CD4-positive, alpha-beta memory T cell (primary cell): ENCODE measurements at regions of chr6 and their contacts with region 1.

Region 1: DNA sequence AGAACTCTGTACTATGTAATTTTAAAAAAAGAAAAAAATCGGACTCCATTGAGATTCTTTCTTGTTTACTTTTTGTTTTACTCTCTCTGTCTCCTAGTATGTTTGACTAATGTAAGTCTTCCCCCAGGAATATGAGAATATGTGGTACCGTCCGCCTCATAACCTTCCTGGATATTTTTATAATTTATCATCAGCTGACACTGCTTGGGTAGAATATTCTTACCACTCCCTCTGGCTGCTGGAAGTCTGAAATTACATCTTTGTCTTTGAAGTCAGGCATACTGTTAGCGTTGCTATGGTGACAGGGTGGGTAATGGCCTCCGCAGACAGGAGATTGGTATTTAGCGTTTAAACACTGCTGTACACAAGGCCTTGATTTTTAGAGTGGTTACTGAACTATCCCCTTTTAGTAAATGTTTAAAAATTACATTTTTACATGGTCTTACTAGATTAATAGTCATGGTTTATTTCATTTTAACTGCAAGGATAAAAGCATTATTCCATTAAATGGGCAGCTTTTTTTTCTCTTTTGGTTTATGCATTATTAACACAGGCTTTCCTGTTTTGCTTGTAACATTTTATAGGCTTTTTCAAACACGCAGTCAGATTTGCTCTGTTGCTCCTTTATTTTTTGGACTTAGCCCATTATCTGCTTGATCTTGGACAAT is 176.4 kb downstream of the ARID1B start:
- DNase-seq: peak; percentile 60 to 77 (median 74)
- H3K4me3 ChIP-seq: no peak overlapping the region
- H3K4me3 Mint-ChIP-seq: peak overlapping the region in 2 of 8 donors; percentile 7 to 34
- H3K27ac ChIP-seq: no peak overlapping the region
- H3K27ac Mint-ChIP-seq: peak overlapping the region; percentile 6 to 87 (median 77)
- H3K4me1 ChIP-seq: peaks cover 52% of the 10 kb centered on the region
- H3K4me1 Mint-ChIP-seq: peaks cover 55 to 83% (median 71%) of the 10 kb centered on the region in 4 donors
- H3K27me3 ChIP-seq: no peaks in the 10 kb centered on the region
- H3K27me3 Mint-ChIP-seq: no peaks in the 10 kb centered on the region

Region 2: GRCh38 chr6:156502969-156503504 is 450.6 kb before region 1 on chr6:
- CTCF ChIA-PET with region 1: no interaction called
- POLR2A ChIA-PET with region 1: no interaction called
- intact Hi-C with region 1: no loop called
- DNase-seq: no peak
- H3K4me3 ChIP-seq: no peak overlapping the region
- H3K4me3 Mint-ChIP-seq: no peak overlapping the region
- H3K27ac ChIP-seq: no peak overlapping the region
- H3K27ac Mint-ChIP-seq: no peak overlapping the region
- H3K4me1 ChIP-seq: no peaks in the 10 kb centered on the region
- H3K4me1 Mint-ChIP-seq: no peaks in the 10 kb centered on the region
- H3K27me3 ChIP-seq: no peaks in the 10 kb centered on the region
- H3K27me3 Mint-ChIP-seq: peaks cover 4 to 9% of the 10 kb centered on the region in 2 donors

Region 3: DNA sequence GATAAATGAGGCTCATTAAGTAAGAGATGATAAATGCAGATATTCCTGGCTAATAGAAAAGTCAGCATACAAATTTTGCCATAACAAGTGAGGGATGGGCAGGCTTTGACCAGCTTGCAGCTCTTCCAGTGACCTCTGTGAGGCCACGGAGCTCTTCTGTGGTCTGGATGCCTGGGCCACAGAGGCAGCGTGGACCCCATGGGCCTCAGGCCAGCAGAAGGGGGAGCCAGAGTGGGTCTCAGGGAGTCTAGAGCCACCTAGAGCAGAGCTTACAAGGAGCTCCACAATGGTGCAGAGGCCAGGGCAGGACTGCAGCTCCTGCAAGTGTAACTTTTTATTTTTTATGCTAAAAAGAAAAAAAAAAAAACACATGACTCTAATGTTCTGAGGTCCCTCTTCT is 11.3 kb before region 1 on chr6:
- CTCF ChIA-PET with region 1: interaction called, 13 read pairs
- POLR2A ChIA-PET with region 1: no interaction called
- intact Hi-C with region 1: no loop called
- DNase-seq: no peak
- H3K4me3 ChIP-seq: no peak overlapping the region
- H3K4me3 Mint-ChIP-seq: no peak overlapping the region
- H3K27ac ChIP-seq: no peak overlapping the region
- H3K27ac Mint-ChIP-seq: peak overlapping the region in 2 of 7 donors; percentile 19 to 22
- H3K4me1 ChIP-seq: peaks cover 19% of the 10 kb centered on the region
- H3K4me1 Mint-ChIP-seq: peaks cover 52 to 77% (median 65%) of the 10 kb centered on the region in 4 donors
- H3K27me3 ChIP-seq: no peaks in the 10 kb centered on the region
- H3K27me3 Mint-ChIP-seq: no peaks in the 10 kb centered on the region